ENCODE measurements at regions of chr2 and their contacts with region 1.

Region 1: GRCh38 chr2:26577434-26578112 is 63.6 kb downstream of the CIB4 start:
- DNase-seq: peak; percentile 65
- H3K4me3 Mint-ChIP-seq: no peak overlapping the region
- H3K27ac Mint-ChIP-seq: no peak overlapping the region
- H3K4me1 Mint-ChIP-seq: no peaks in the 10 kb centered on the region
- H3K27me3 Mint-ChIP-seq: peaks cover 25% of the 10 kb centered on the region

Region 2: DNA sequence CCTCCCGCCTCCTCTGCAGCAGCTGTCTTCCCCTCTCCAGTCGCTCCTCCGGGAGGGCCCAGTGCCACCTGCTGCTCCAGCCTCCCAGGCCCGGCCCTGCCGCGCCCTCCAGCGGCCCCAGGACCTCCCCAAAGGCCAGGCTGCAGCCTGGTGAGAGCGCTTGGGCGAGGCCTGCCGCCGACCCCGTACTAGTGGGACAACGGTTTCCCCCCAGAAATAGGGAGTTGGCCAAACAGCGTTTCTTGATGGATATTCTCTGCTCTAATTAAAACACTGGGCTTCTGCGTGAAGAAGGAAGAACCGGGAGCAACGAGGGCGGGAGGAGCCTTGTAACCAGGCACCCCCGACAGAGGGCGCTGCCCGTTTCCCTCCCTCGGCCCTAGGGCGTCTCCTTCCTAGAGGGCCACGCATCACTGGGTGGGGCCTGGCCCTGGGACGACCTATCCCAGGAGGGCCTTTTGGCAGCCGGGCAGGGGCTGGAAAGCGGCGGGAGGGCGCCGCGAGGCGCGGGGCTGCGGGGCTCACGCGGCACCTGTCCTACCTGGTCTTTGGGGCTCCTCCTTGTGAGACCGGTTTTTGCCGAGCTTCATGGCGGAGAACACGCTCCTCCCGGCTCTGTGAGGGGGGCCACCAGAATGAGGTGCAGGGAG is 74.2 kb before region 1 on chr2:
- CTCF ChIA-PET with region 1: interaction called, 33 read pairs
- POLR2A ChIA-PET with region 1: no interaction called
- DNase-seq: peak; percentile 89
- H3K4me3 Mint-ChIP-seq: peak overlapping the region; percentile 70
- H3K27ac Mint-ChIP-seq: peak overlapping the region; percentile 53
- H3K4me1 Mint-ChIP-seq: peaks cover 7% of the 10 kb centered on the region
- H3K27me3 Mint-ChIP-seq: peaks cover 9% of the 10 kb centered on the region

Region 3: DNA sequence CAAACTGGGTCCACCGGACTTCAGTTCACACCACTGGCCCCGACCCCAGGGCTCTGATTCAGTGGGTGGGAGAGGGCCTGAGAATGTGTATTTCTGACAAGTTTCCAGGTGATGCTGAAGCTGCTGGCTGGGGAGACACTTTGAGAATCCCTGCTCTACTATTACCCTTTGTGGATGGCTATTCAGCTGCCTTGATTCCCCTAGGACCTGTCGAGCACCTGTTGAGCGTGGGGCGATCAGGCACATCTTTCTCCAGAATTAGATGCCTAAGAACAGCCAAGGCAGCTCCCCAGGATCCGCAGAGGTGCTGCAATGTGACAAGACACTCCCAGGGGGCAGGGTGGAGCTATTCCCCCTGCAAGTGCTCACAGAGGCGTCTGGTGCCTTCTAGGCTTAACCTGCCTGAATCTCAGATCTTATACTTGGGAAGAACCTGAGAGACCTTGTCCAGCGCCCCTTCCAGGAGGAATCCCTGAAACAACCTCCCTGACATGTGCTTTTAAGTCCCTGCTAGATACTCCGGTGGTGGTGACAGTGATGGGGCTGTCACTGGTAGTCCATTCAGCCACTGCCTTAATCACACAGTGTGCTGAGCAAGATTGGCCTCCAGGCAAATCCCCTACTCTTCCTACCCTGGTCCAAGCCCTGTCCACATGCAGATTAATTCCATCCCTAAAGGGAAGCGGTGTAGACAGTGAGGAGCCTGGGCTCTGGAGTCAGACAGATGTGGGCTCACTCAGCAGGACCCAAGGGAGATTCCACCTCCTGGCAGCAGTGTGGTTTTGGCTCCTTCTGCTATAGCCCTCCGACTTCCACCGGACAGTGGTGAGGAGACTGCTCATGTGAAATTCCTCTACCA is 56.3 kb before region 1 on chr2:
- CTCF ChIA-PET with region 1: interaction called, 12 read pairs
- POLR2A ChIA-PET with region 1: no interaction called
- DNase-seq: no peak
- H3K4me3 Mint-ChIP-seq: no peak overlapping the region
- H3K27ac Mint-ChIP-seq: no peak overlapping the region
- H3K4me1 Mint-ChIP-seq: peaks cover 11% of the 10 kb centered on the region
- H3K27me3 Mint-ChIP-seq: peaks cover 11% of the 10 kb centered on the region

Region 4: DNA sequence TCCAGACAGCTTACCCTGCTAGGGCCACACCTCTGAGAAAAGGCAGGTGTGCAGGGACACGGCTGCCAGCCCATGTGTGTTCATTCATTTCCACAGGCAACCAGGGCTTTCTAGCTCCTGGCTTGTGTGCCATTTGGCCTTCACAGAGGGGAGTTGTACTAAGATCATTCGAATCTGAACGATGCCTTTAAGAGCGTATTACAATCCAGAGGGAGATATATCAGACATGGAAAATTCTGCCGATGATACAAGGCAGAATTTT is 35.4 kb before region 1 on chr2:
- CTCF ChIA-PET with region 1: interaction called, 14 read pairs
- POLR2A ChIA-PET with region 1: no interaction called
- DNase-seq: no peak
- H3K4me3 Mint-ChIP-seq: no peak overlapping the region
- H3K27ac Mint-ChIP-seq: no peak overlapping the region
- H3K4me1 Mint-ChIP-seq: no peaks in the 10 kb centered on the region
- H3K27me3 Mint-ChIP-seq: peaks cover 17% of the 10 kb centered on the region

Region 5: DNA sequence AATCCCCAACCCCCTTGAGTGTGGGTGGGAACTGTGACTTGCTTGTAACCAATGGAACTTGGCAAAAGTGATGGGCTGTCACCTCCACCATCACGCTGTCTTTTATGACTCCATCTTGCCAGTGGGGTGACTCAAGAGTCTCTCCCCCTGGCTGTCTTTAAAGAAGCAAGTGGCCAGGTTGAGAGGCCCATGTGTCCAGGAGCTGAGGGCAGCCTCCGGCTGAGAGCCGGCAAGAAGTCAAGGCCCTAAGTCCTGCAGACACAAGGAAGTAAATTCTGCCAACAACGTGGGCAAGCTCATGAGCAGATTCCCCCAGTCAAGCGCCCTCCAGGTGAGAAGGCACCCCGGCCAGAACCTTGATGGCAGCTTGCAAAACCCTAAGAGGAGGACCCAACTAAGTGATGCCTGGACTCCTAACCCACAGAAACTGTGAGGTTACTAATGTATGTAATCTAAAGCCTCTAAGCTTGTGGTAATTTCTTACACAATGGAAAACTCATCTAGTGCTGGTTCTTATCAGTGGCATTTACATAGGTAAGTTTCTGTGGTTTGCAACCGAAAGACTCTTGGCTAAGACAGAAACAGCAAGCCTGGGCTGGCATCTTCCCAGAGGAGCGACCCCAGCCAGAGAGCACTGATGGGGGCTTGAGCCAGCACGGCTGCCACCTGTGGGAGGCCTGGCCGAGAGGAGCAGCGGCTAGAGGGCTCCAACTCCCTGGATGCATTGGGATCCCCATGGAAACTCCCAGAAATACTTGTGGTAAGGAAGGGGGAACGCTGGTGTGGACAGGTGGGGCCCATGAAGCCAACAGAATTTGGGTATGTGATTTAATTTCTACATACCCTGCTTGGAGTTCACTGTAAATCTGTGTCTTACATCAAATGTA is 14.3 kb after region 1 on chr2:
- CTCF ChIA-PET with region 1: interaction called, 19 read pairs
- POLR2A ChIA-PET with region 1: no interaction called
- DNase-seq: no peak
- H3K4me3 Mint-ChIP-seq: no peak overlapping the region
- H3K27ac Mint-ChIP-seq: no peak overlapping the region
- H3K4me1 Mint-ChIP-seq: peaks cover 5% of the 10 kb centered on the region
- H3K27me3 Mint-ChIP-seq: peaks cover 44% of the 10 kb centered on the region

Region 6: DNA sequence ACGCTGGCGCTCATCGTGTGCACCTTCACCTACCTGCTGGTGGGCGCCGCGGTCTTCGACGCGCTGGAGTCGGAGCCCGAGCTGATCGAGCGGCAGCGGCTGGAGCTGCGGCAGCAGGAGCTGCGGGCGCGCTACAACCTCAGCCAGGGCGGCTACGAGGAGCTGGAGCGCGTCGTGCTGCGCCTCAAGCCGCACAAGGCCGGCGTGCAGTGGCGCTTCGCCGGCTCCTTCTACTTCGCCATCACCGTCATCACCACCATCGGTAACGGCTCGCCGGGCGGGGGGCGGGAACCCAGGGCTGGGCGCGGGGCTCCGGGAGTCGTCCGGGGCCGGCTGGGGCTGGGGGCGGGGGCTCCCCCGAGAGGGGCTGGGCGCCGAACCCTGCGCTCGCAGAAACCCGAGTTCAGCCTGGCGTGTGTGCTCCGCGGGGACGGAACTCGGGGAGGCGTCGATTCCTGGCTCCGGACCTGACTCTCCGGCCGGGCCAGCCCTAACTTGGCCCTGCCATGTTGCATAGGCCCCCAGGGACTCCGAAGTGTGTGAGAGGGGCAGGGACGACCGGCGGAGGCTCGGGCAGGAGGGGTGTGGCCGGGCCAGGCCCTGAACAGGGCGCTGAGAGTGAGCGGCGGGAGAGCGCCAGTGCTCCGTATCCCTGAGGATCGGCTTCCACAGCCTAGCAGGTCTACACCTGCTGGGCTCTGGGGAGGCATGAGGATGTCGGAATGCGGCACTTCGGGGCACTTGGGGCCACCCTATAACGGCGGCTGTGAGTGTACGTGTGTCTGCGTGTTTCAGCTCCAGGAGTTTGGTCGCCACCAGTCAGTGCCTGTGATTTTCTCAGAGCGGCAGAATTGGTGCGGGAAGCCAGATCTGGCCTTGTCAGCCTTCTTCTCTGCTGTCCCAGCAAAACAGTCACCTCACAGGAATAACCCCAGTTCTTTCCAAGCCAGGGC is 115.6 kb after region 1 on chr2:
- CTCF ChIA-PET with region 1: no interaction called
- POLR2A ChIA-PET with region 1: no interaction called
- DNase-seq: no peak
- H3K4me3 Mint-ChIP-seq: no peak overlapping the region
- H3K27ac Mint-ChIP-seq: no peak overlapping the region
- H3K4me1 Mint-ChIP-seq: no peaks in the 10 kb centered on the region
- H3K27me3 Mint-ChIP-seq: peaks cover 56% of the 10 kb centered on the region

Measured in activated CD4-positive, alpha-beta memory T cell treated with anti-CD3 and anti-CD28 coated beads, Interleukin-2, amount 10 ng/mL, durations not matched to agents 7 days and 5 days (primary cell).